Vagina (tissue), 2 donors: ENCODE measurements at regions of chr3 and their contacts with region 1.

Region 1: GRCh38 chr3:173770011-173770410 is 372.5 kb downstream of the NLGN1 start:
- DNase-seq: no peak
- H3K4me3 ChIP-seq: no peak overlapping the region
- H3K27ac ChIP-seq: no peak overlapping the region
- H3K4me1 ChIP-seq: no peaks in the 10 kb centered on the region
- H3K27me3 ChIP-seq: no peaks in the 10 kb centered on the region
- CTCF ChIP-seq: no peak
- POLR2A ChIP-seq: no peak

Region 2: DNA sequence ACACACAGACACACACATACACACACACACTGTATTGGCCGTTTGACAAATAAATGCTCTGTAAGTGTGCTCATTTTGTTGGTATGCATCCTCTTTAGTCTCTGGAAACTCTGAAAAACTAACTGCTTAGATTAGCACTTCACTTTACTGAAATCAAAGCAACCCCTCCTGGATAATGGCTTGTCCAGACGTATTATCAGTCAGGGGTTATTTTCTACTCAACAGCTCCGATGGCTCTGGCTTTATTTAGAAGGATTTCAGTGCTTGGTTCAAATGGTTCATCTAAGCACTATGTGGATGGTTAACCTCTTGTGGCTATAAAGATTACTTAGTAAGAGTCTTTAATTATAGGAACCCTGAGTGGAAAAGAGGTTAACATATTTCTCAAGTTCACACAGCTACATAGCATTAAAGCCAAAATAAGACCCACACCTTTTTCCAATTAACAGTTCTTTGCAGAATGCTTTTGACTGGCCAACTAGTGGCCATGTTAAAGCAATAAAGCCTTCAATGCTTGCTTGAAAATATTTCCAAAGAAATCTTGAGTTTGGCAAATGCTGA is 573.0 kb after region 1 on chr3:
- intact Hi-C with region 1: no loop called
- DNase-seq: no peak
- H3K4me3 ChIP-seq: no peak overlapping the region
- H3K27ac ChIP-seq: no peak overlapping the region
- H3K4me1 ChIP-seq: no peaks in the 10 kb centered on the region
- H3K27me3 ChIP-seq: no peaks in the 10 kb centered on the region
- CTCF ChIP-seq: no peak
- POLR2A ChIP-seq: no peak

Region 3: GRCh38 chr3:175066617-175067415 is 1296.8 kb after region 1 on chr3:
- intact Hi-C with region 1: loop called (anchors 2 kb)
- DNase-seq: no peak
- H3K4me3 ChIP-seq: no peak overlapping the region
- H3K27ac ChIP-seq: no peak overlapping the region
- H3K4me1 ChIP-seq: no peaks in the 10 kb centered on the region
- H3K27me3 ChIP-seq: no peaks in the 10 kb centered on the region
- CTCF ChIP-seq: no peak
- POLR2A ChIP-seq: no peak